ENCODE measurements at regions of chr3 and their contacts with region 1.

Region 1: GRCh38 chr3:5918626-5919025 is 731.1 kb downstream of the EDEM1 start:
- DNase-seq: no peak
- H3K4me3 Mint-ChIP-seq: no peak overlapping the region
- H3K27ac Mint-ChIP-seq: no peak overlapping the region
- H3K4me1 Mint-ChIP-seq: no peaks in the 10 kb centered on the region
- H3K27me3 Mint-ChIP-seq: no peaks in the 10 kb centered on the region
- CTCF ChIP-seq: no peak

Region 2: GRCh38 chr3:5891711-5892110 is 26.9 kb before region 1 on chr3:
- CTCF ChIA-PET with region 1: no interaction called
- intact Hi-C with region 1: no loop called
- DNase-seq: no peak
- H3K4me3 Mint-ChIP-seq: no peak overlapping the region
- H3K27ac Mint-ChIP-seq: no peak overlapping the region
- H3K4me1 Mint-ChIP-seq: no peaks in the 10 kb centered on the region
- H3K27me3 Mint-ChIP-seq: no peaks in the 10 kb centered on the region
- CTCF ChIP-seq: no peak

Region 3: GRCh38 chr3:7793786-7794185 is 1875.2 kb after region 1 on chr3:
- CTCF ChIA-PET with region 1: interaction called, 11 read pairs
- intact Hi-C with region 1: no loop called
- DNase-seq: no peak
- H3K4me3 Mint-ChIP-seq: no peak overlapping the region
- H3K27ac Mint-ChIP-seq: no peak overlapping the region
- H3K4me1 Mint-ChIP-seq: peaks cover 12% of the 10 kb centered on the region
- H3K27me3 Mint-ChIP-seq: no peaks in the 10 kb centered on the region
- CTCF ChIP-seq: no peak